ENCODE measurements at regions of chr4 and their contacts with region 1.

Region 1: GRCh38 chr4:77385124-77385969 is 220.3 kb upstream of the CXCL13 start:
- DNase-seq: peak; percentile 53
- H3K4me3 ChIP-seq: no peak overlapping the region
- H3K27ac ChIP-seq: no peak overlapping the region
- H3K4me1 ChIP-seq: no peaks in the 10 kb centered on the region
- H3K27me3 ChIP-seq: peaks cover 10% of the 10 kb centered on the region
- CTCF ChIP-seq: peak; percentile 86 to 87

Region 2: DNA sequence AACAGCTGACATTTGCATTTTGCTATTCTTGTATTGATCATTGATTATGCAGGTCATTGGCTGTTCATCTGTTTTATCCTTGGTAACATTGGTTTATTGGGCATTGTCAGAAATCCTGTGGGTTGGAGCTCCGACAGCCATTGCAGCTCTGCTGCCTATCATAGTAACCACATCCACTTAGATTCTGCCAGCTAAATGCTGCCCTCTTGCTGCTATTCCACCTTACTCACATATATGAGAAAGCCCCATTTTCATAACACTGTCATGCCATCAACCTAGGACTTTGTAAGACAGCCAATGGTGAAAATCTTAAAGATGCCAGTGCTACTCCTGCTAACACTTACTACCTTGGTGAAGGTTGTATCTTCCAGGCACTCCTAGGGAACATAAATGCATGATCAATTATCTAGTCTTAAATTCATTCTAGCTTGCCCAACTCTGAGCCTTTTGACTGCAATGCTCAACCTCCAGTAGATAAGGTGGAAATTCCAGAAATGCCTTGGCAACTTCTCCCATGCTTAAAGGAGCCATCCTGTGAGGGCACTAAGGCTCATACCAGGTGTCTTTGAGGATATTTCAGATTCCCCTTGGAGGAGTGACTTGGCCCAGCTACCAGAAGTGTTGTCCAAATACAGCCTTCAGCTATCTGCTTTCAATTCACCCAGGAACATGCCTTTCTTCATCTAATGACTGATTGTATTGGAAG is 33.1 kb after region 1 on chr4:
- CTCF ChIA-PET with region 1: no interaction called
- dilution Hi-C with region 1: no loop called
- in situ Hi-C with region 1: no loop called
- intact Hi-C with region 1: loop called (anchors 1 kb)
- DNase-seq: peak; percentile 21
- H3K4me3 ChIP-seq: no peak overlapping the region
- H3K27ac ChIP-seq: no peak overlapping the region
- H3K4me1 ChIP-seq: no peaks in the 10 kb centered on the region
- H3K27me3 ChIP-seq: no peaks in the 10 kb centered on the region
- CTCF ChIP-seq: peak; percentile 43 to 56

Region 3: GRCh38 chr4:77473509-77473908 is 88.2 kb after region 1 on chr4:
- CTCF ChIA-PET with region 1: no interaction called
- dilution Hi-C with region 1: no loop called
- in situ Hi-C with region 1: no loop called
- intact Hi-C with region 1: loop called (anchors 1 kb)
- DNase-seq: no peak
- H3K4me3 ChIP-seq: no peak overlapping the region
- H3K27ac ChIP-seq: no peak overlapping the region
- H3K4me1 ChIP-seq: peaks cover 10% of the 10 kb centered on the region
- H3K27me3 ChIP-seq: peaks cover 1% of the 10 kb centered on the region
- CTCF ChIP-seq: peak; percentile 39 to 60

Region 4: GRCh38 chr4:77618383-77619122 is 233.2 kb after region 1 on chr4:
- CTCF ChIA-PET with region 1: no interaction called
- dilution Hi-C with region 1: no loop called
- in situ Hi-C with region 1: loop called in 1 of 2 experiments (anchors 5 kb)
- intact Hi-C with region 1: loop called (anchors 1 kb)
- DNase-seq: peak; percentile 59
- H3K4me3 ChIP-seq: no peak overlapping the region
- H3K27ac ChIP-seq: no peak overlapping the region
- H3K4me1 ChIP-seq: peaks cover 10% of the 10 kb centered on the region
- H3K27me3 ChIP-seq: no peaks in the 10 kb centered on the region
- CTCF ChIP-seq: peak; percentile 75 to 84

Region 5: DNA sequence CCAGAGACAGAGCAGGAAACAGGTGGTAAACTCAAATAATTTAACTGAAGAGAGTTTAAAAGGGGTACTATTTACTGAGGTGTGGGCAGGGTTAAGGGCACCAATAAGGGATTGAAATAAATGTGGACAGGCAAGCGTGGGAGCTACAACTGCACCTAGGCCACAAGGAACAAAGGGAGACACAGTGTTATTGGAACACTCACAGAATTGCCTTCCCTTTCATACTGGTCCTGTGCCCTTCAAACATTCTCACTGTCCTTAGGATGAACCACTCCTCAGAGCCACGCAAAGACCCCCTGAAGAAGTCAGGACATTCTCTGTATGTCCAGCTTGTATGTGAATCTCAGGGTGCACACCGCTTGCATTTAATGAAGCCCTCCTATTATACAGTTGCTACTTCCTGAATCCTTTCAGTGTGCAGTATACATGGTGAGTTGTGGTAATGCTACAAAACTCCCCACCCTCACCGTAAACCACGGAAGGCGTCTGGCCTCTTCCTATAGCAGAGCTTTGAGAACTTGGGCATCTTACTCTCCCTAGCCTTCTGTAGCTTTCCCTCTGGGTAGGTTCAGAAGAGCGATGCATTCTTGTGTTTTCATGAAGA is 467.6 kb after region 1 on chr4:
- CTCF ChIA-PET with region 1: no interaction called
- dilution Hi-C with region 1: no loop called
- in situ Hi-C with region 1: no loop called
- intact Hi-C with region 1: loop called (anchors 10 kb)
- DNase-seq: no peak
- H3K4me3 ChIP-seq: no peak overlapping the region
- H3K27ac ChIP-seq: no peak overlapping the region
- H3K4me1 ChIP-seq: no peaks in the 10 kb centered on the region
- H3K27me3 ChIP-seq: no peaks in the 10 kb centered on the region
- CTCF ChIP-seq: no peak

Measured in mammary epithelial cell (primary cell).